Aorta (tissue), 5 donors: ENCODE measurements at regions of chr14 and their contacts with region 1.

Region 1: DNA sequence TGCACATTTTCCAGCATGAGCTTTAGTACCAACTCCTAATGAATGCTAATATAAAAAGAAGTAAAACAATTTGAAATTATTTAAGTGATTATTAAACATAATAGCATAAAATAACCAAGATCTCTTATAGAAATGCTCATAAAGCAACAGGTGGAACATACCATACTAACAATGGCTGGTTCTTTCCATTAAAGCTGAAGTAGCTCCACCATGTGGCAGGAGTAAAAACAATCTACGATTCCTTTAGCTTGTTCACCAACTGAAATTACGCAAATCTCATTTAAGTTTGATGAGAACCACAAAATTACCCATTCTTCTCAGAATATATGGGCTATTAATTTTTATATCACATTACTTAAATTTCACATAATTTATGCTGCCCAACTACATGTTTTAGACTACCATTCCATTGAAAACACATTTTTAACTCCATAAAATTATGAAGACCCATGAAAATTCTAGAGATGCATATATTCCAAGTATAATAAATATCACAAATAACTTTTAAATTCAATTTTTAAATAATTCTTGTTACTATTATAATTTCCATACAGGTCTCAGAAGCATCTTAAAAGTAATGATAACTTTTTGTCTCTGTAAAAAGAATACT is 213.6 kb downstream of the DAD1 start:
- DNase-seq: no peak
- ATAC-seq: no peak
- H3K4me3 ChIP-seq: no peak overlapping the region
- H3K27ac ChIP-seq: no peak overlapping the region
- H3K4me1 ChIP-seq: peaks cover 0 to 7% of the 10 kb centered on the region in 2 donors
- H3K27me3 ChIP-seq: no peaks in the 10 kb centered on the region

Region 2: DNA sequence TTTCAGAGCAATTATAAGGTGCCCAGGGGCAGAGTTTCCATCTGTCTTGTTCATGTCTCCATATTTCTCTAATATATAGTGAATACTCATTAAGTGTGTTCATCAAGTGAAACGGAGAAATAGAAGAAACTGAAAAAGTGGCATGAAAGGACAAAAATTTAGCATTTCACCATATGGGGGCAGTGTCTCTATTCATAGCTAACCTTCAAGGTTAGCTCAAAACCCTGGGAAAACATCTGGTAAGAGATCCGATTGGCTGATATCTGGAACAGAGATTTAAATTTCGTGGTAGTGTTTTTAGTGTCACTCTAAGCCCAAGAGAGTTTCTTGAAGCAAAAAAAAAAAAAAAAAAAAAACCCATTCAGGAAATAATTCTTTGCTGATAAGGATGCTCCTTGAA is 153.9 kb before region 1 on chr14:
- intact Hi-C with region 1: loop called in 1 of 2 experiments (anchors 2 kb)
- DNase-seq: no peak
- ATAC-seq: no peak
- H3K4me3 ChIP-seq: no peak overlapping the region
- H3K27ac ChIP-seq: no peak overlapping the region
- H3K4me1 ChIP-seq: no peaks in the 10 kb centered on the region
- H3K27me3 ChIP-seq: no peaks in the 10 kb centered on the region

Region 3: GRCh38 chr14:22319526-22320361 is 55.7 kb before region 1 on chr14:
- intact Hi-C with region 1: loop called (anchors 2 to 5 kb)
- DNase-seq: peak in 1 of 2 donors; percentile 56
- ATAC-seq: peak; percentile 63
- H3K4me3 ChIP-seq: no peak overlapping the region
- H3K27ac ChIP-seq: no peak overlapping the region
- H3K4me1 ChIP-seq: no peaks in the 10 kb centered on the region
- H3K27me3 ChIP-seq: no peaks in the 10 kb centered on the region

Region 4: DNA sequence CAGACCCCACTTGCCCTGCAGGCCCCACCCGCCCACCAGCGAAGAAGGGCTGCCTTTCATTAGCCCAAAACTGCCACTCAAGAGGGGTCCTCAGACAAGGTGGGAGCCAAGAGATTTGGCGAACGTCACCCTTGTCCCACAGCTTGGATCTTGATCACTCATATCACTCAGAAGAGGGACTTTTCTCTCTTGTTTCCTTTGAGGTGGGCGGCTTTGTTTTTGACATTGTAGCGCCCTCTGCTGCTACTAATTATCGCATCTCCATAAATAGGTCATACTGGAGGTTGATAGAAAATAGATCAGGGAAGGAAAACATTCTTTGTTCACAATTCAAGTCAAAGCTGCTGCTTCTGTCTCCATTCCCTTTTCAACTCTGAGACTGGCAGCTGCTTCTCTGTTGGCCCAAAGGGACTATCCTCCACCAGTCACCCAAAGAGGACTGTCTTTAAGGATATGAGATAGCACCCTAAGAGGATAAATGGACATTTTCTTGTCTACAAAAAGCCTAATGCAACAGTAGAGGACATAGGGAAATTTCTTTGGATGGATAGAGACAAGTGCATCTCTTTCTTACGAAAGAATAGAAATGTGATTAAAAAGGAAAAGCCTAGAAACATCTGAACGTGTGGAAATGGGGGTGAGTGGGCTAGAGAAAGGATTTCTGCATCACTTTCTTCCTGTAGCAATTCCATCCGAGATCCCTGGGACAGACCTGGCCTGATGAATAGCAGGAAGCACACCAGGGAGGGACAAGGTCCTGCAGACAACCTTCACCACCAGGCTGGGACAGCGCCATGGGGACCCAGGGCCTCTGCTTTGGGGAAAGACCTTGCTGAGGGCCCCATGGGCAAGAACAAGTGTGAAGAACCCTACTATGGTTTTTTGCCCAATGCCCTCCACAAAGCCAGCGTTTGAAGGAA is 97.8 kb after region 1 on chr14:
- intact Hi-C with region 1: no loop called
- DNase-seq: no peak
- ATAC-seq: no peak
- H3K4me3 ChIP-seq: no peak overlapping the region
- H3K27ac ChIP-seq: no peak overlapping the region
- H3K4me1 ChIP-seq: peaks cover 0 to 3% of the 10 kb centered on the region in 2 donors
- H3K27me3 ChIP-seq: peaks cover 0 to 2% of the 10 kb centered on the region in 2 donors